ENCODE measurements at regions of chr20 and their contacts with region 1.

Region 1: DNA sequence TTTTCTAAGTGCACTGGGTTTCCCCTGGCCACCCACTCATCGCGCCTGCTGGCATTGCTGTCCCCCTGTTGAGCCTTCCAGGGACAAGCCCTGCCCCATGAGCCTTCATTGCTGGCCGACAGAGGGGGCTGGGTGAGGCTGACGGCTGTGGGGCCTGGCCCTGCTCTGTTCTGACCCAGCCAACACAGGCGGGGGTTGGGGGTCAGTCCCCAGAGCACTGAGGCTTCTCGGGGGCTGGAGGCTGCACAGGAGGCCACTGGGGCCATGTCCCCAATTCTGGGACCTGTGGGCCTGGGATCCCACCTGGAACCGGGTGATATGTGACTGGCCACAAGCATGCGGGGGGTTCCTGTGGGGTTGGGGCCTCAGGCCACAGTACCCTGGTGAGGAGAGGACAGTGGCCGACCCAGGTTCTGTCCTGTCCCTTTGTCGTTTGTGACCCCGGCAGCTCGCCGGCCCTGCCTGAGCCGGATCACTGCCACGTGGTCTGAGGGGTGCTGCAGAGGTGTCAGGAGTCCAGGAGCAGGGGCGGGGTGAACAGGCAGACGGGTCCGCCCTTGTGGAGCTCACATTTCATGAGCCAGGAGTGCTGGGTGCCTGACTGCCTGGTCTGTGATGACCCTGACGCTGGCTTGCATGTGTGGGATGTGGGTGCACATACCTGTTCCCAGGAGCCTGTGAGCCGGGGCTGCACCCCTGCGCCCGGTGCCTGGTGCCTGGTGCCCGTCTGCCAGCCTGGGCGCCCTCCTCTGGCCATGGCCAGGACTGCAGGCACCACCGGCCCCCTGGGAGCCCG is 2.1 kb upstream of the COL20A1 start:
- DNase-seq: peak; percentile 85
- ATAC-seq: peak; percentile 75
- H3K4me3 Mint-ChIP-seq: no peak overlapping the region
- H3K27ac Mint-ChIP-seq: no peak overlapping the region
- H3K4me1 Mint-ChIP-seq: peaks cover 6% of the 10 kb centered on the region
- H3K27me3 Mint-ChIP-seq: peaks cover 5% of the 10 kb centered on the region

Region 2: GRCh38 chr20:63056236-63056948 is 234.5 kb before region 1 on chr20:
- CTCF ChIA-PET with region 1: no interaction called
- POLR2A ChIA-PET with region 1: no interaction called
- intact Hi-C with region 1: loop called in 1 of 2 experiments (anchors 5 kb)
- DNase-seq: peak; percentile 71
- ATAC-seq: peak; percentile 71
- H3K4me3 Mint-ChIP-seq: no peak overlapping the region
- H3K27ac Mint-ChIP-seq: no peak overlapping the region
- H3K4me1 Mint-ChIP-seq: no peaks in the 10 kb centered on the region
- H3K27me3 Mint-ChIP-seq: peaks cover 16% of the 10 kb centered on the region

Region 3: GRCh38 chr20:63223221-63224207 is 67.4 kb before region 1 on chr20:
- CTCF ChIA-PET with region 1: interaction called, 4 read pairs
- POLR2A ChIA-PET with region 1: no interaction called
- intact Hi-C with region 1: loop called in 1 of 2 experiments (anchors 1 kb)
- DNase-seq: peak; percentile 68
- ATAC-seq: peak; percentile 75
- H3K4me3 Mint-ChIP-seq: no peak overlapping the region
- H3K27ac Mint-ChIP-seq: no peak overlapping the region
- H3K4me1 Mint-ChIP-seq: no peaks in the 10 kb centered on the region
- H3K27me3 Mint-ChIP-seq: peaks cover 4% of the 10 kb centered on the region

Measured in activated CD4-positive, alpha-beta T cell treated with anti-CD3 and anti-CD28 coated beads for 36 hours (primary cell).